ENCODE measurements at regions of chr14 and their contacts with region 1.

Region 1: DNA sequence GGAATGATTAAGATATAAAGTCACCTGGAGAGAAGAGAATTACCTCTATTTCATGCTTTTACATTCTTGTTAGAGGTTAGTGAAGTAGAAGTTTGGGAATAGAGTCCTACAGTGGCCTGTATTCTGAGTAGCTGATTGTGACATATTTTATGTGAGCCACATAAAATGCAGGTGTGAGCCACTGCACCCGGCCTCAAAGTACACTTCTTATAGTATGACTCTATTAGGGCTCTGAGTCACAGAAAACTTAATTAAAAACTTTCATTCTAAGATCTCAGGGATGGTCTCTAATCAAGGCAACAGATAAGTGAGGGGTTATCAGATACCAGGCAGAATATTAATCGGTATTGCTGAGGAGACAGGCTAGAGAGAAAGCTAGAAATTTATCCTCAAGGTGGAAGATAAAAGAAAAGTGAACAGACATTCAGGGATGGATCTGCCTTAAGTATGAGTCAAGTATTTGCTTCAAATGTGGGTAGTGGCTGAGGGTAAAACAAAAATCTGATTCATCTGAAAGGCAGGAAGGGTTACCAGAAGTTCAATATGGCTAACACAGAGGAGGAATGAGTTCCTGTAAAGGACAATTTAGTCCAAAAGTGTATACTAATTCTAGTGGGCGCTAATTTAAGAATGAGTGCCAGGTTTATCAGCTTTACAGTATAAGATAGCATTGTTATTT is 5.5 kb upstream of the G2E3 start:
- DNase-seq: peak; percentile 82
- H3K4me3 ChIP-seq: peak overlapping the region in 1 of 3 experiments; percentile 6
- H3K27ac ChIP-seq: peak overlapping the region; percentile 66
- H3K4me1 ChIP-seq: peaks cover 44% of the 10 kb centered on the region
- H3K27me3 ChIP-seq: no peaks in the 10 kb centered on the region
- CTCF ChIP-seq: no peak

Region 2: DNA sequence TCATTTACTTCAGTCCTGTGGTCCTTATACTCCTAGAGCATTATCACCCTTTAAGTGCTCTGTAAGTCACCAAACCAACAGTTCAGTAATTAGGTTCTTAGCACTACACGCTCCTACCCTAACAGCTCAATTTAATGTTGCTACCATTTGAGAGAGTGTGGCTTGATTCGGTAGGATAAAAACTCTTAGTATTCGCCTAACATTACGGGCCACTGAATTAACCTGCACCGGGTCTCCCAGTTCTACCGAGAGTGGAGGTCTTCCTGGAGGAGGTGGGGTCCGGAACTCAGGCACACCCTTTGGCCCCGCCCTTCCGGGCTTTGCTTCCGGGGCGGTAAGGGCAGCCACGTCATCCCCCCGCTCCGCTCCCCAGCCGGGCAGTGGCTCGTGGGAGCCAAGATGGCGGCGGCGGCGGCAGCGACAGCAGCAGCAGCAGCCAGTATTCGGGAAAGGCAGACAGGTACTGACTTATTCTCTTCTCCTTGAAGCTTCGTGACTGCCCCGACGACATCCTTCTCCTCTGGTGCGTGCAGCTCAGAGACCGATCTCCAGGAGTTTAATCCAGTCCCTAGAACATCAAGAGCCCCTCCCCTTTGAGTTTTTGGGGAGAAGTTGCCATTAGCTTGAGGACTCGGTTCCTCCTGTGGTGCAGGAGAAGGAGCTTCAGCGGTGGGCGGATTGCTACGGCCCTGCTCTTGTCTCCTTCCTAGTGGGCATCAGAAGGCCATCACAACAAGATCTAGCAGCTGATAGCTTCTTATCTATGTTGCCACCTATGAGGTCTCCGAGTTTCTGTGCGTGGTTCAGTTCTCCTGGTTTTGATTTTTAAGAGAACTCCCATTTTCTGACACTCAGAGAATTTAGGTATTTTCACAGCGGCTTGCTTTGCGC is 68.7 kb after region 1 on chr14 and contains the start of gene SCFD1:
- CTCF ChIA-PET with region 1: no interaction called
- dilution Hi-C with region 1: no loop called
- in situ Hi-C with region 1: no loop called
- intact Hi-C with region 1: loop called (anchors 5 kb)
- DNase-seq: peak; percentile 82
- H3K4me3 ChIP-seq: peak within 1 kb of the TSS; percentile 63 to 90 (median 77)
- H3K27ac ChIP-seq: peak within 1 kb of the TSS; percentile 79
- H3K4me1 ChIP-seq: peaks cover 15% of the 10 kb centered on the region
- H3K27me3 ChIP-seq: no peaks in the 10 kb centered on the region
- CTCF ChIP-seq: no peak
- total RNA-seq, gene SCFD1: 72.1 to 72.8 TPM

Measured in mammary epithelial cell (primary cell).